ENCODE measurements at regions of chr1 and their contacts with region 1.

Region 1: DNA sequence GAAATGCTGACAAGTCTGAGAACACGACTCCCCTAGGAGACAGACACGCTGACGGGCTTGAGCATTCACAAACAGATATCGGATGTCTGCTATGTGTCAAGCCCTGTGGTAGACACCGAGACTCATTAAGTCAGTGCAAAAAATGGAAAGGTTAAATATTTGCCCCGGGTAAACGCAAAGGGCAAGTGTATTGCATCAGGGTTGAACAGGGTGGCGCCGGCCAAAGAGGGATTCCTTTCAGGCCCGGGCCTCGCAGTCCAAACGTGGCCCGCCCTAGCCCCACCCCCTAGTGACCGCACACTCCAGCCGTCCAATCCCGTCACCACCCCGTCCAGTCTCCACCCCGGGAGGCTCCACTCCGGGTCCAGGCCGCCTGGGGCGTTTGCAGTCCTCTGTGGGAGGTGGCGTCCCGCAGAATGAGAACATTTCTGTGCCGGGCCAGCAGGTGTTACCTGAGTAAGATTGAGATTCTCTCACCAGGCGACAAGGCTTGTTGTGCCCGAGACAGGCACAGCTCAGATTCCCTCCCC is 16.3 kb upstream of the TMEM9 start:
- DNase-seq: peak; percentile 71 to 96
- H3K4me3 ChIP-seq: peak overlapping the region; percentile 79 to 89
- H3K27ac ChIP-seq: peak overlapping the region; percentile 81 to 83
- H3K4me1 ChIP-seq: peaks cover 0 to 2% of the 10 kb centered on the region in 2 donors
- H3K27me3 ChIP-seq: no peaks in the 10 kb centered on the region
- CTCF ChIP-seq: no peak

Region 2: DNA sequence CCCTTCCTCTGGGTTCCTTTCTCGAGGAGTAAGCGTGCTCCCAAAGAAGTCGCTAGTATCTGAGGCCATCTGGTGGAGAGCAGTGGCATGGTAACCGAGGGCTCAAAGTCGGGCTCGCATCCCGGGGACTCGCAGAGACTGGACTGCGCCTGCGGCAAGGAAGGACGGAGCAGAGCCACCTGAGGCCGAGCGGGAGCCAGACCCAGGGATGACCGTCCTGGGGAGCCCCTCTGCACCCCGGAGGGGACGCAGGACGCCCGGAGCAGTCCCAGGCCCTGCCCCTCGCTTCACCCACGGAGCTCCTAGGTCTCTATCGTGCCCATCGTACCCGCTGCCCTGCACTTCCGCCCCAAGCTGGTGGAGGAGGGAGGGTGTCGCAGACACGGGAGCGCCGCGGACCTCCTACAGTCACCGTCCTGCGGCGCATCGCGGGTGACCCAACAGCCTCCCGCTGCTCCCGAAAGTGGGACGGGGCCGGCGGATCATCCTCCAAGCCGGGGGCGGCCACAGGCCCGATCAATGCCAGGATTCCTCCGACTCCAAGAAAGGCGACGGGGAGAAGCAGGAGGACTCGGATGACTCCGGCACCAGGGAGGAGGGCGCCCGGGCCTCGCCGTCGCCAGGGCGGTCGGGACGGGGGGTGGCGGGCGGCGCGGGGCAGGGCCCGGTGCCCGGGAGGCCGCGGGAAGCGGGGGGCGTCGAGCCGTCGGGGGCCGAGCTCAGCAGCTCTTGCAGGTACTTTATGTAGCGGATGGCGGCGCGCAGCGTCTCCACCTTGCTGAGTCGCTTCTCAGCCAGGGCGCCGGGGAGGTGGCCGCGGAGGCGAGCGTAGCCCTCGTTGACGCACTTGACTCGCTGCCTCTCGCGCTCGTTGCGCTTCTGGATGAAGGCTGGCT is 56.1 kb before region 1 on chr1:
- intact Hi-C with region 1: no loop called
- DNase-seq: peak; percentile 37 to 93
- H3K4me3 ChIP-seq: peak overlapping the region; percentile 66 to 74
- H3K27ac ChIP-seq: peak overlapping the region in 1 of 2 donors; percentile 29
- H3K4me1 ChIP-seq: no peaks in the 10 kb centered on the region
- H3K27me3 ChIP-seq: no peaks in the 10 kb centered on the region
- CTCF ChIP-seq: peak; percentile 82 to 88 (median 87)

Region 3: DNA sequence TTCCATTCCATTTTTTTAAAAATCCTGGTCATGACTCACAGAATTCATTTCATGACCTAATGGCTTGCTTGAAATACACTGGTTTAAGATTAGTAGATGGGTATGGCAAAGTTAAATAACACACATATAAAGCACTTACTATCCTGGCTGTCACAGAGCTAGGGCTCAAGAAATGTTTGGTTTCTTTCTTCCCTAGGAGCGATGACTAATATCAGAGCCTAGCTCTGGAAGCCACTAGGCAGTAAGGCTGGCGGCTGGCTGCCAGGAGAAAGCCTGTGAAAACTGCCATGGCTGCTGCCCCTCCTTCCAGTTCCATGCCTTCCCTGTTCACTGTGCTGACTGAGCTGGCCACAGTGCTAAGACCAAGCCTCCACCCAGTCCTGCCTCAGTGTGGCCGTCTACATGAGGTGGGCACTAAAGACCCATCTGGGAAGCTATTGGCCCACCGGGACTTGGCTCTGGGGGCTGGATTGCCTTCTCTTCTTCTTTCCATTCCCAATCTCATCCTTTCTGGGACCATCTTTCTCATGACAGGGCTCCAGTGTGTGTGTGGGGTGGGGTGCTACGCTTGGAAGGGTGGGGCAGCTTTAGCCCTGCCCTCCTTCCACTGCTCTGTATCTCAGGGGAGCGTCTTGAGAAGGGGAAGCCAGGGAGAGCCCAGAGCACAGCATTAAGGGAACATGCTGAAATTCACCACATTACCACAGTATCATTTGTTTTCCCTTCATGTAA is 32.9 kb before region 1 on chr1:
- intact Hi-C with region 1: loop called (anchors 5 kb)
- DNase-seq: peak in 1 of 2 donors; percentile 86
- H3K4me3 ChIP-seq: no peak overlapping the region
- H3K27ac ChIP-seq: peak overlapping the region; percentile 62 to 78
- H3K4me1 ChIP-seq: peaks cover 0 to 13% of the 10 kb centered on the region in 2 donors
- H3K27me3 ChIP-seq: no peaks in the 10 kb centered on the region
- CTCF ChIP-seq: no peak

Region 4: GRCh38 chr1:201154389-201155165 is 16.0 kb before region 1 on chr1 and contains the start of gene TMEM9:
- intact Hi-C with region 1: loop called (anchors 1 kb)
- DNase-seq: peak; percentile 90 to 98
- H3K4me3 ChIP-seq: peak within 1 kb of the TSS; percentile 75 to 91
- H3K27ac ChIP-seq: peak within 1 kb of the TSS; percentile 37 to 41
- H3K4me1 ChIP-seq: peaks cover 8 to 13% of the 10 kb centered on the region in 2 donors
- H3K27me3 ChIP-seq: no peaks in the 10 kb centered on the region
- CTCF ChIP-seq: no peak
- total RNA-seq, gene TMEM9: 45.8 TPM

Region 5: GRCh38 chr1:201268604-201269151 is 98.1 kb after region 1 on chr1:
- intact Hi-C with region 1: no loop called
- DNase-seq: peak in 1 of 2 donors; percentile 56
- H3K4me3 ChIP-seq: no peak overlapping the region
- H3K27ac ChIP-seq: no peak overlapping the region
- H3K4me1 ChIP-seq: no peaks in the 10 kb centered on the region
- H3K27me3 ChIP-seq: no peaks in the 10 kb centered on the region
- CTCF ChIP-seq: no peak